OCI-LY7 (cell line): ENCODE measurements at regions of chr6 and their contacts with region 1.

Region 1: GRCh38 chr6:28008053-28008452 is 51.0 kb downstream of the OR2B6 start:
- DNase-seq: no peak
- H3K4me3 ChIP-seq: no peak overlapping the region
- H3K27ac ChIP-seq: no peak overlapping the region
- H3K4me1 ChIP-seq: peaks cover 17% of the 10 kb centered on the region
- CTCF ChIP-seq: no peak

Region 2: GRCh38 chr6:27452496-27452897 is 555.6 kb before region 1 on chr6:
- CTCF ChIA-PET with region 1: no interaction called
- POLR2A ChIA-PET with region 1: no interaction called
- intact Hi-C with region 1: no loop called
- DNase-seq: peak; percentile 26
- H3K4me3 ChIP-seq: no peak overlapping the region
- H3K27ac ChIP-seq: no peak overlapping the region
- H3K4me1 ChIP-seq: no peaks in the 10 kb centered on the region
- CTCF ChIP-seq: no peak

Region 3: GRCh38 chr6:27911956-27912446 is 96.1 kb before region 1 on chr6 and contains the start of gene OR2B2:
- CTCF ChIA-PET with region 1: no interaction called
- POLR2A ChIA-PET with region 1: interaction called, 14 read pairs
- intact Hi-C with region 1: no loop called
- DNase-seq: no peak
- H3K4me3 ChIP-seq: no peak within 1 kb of the TSS
- H3K27ac ChIP-seq: no peak within 1 kb of the TSS
- H3K4me1 ChIP-seq: no peaks in the 10 kb centered on the region
- CTCF ChIP-seq: no peak
- total RNA-seq, gene OR2B2: not detected in 2 replicates

Region 4: DNA sequence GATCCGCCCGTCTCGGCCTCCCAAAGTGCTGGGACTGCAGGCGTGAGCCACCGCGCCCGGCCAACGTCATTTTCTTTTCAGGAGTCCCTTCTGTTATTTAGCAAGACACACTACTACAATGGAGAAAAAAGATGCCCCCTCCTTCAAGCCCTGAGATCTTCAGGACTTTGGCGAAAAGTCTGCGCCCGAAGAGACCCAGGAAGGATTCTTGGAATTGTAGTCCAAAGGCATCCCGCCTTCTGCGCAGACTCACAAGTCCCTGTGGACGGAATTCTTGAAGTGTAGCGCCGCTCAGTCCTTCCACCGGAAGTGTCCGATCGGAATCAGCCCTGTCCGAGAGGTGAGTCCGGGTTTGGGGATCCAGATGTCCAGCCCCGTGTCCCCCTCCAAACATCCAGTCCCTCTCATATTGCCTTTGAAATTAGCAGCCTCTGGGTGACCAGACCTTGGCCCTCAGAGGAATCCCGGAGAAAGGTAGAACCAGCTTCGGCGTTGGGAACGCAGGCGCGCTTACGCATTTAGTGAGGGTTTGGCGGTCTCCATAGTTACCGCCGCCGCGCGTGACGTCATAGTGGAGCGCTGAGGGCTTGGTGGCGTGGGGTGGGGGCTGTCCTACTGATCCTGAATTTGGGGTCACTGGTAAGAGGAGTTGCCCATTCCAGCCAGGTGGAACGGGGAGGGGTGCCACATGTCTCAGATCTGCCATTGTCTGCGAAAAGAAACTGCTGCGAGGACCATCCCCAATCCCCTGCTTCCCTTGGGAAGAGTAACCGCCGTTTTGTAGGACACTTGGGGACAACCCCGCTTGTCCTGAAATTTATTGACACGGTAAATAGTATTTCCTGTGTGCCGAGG is 72.8 kb after region 1 on chr6:
- CTCF ChIA-PET with region 1: no interaction called
- POLR2A ChIA-PET with region 1: no interaction called
- intact Hi-C with region 1: no loop called
- DNase-seq: peak; percentile 95
- H3K4me3 ChIP-seq: peak overlapping the region; percentile 87
- H3K27ac ChIP-seq: peak overlapping the region; percentile 70
- H3K4me1 ChIP-seq: peaks cover 12% of the 10 kb centered on the region
- CTCF ChIP-seq: no peak